ENCODE measurements at regions of chr9 and their contacts with region 1.

Region 1: GRCh38 chr9:88388172-88388885 is at the start of gene SPIN1:
- DNase-seq: peak; percentile 92
- ATAC-seq: peak; percentile 83
- H3K4me3 Mint-ChIP-seq: peak within 1 kb of the TSS; percentile 94
- H3K27ac Mint-ChIP-seq: peak within 1 kb of the TSS; percentile 97
- H3K4me1 Mint-ChIP-seq: peaks cover 40% of the 10 kb centered on the region
- H3K27me3 Mint-ChIP-seq: no peaks in the 10 kb centered on the region
- total RNA-seq, gene SPIN1: 17.9 to 22.1 TPM

Region 2: GRCh38 chr9:87840134-87840533 is 548.2 kb before region 1 on chr9:
- CTCF ChIA-PET with region 1: no interaction called
- POLR2A ChIA-PET with region 1: no interaction called
- intact Hi-C with region 1: no loop called
- DNase-seq: no peak
- ATAC-seq: no peak
- H3K4me3 Mint-ChIP-seq: no peak overlapping the region
- H3K27ac Mint-ChIP-seq: no peak overlapping the region
- H3K4me1 Mint-ChIP-seq: no peaks in the 10 kb centered on the region
- H3K27me3 Mint-ChIP-seq: no peaks in the 10 kb centered on the region

Region 3: DNA sequence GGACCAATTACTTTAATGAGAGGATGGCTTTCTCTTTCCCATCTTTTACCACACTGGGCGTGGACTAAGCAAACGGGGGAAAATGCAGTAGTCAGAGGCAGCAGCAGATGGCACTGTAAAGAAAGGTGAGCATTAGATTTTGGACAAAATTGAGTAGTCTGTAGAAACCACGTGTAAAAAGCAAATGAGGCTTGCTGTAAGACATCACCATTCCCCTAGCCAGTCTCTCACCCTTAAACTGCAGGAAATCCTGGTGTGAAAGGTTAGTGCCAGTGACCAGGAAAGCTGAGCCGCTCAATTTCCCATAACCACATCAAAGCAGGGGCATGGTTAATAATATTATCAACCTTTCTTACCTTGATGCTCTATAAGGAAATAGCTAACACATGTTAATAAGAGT is 281.8 kb before region 1 on chr9:
- CTCF ChIA-PET with region 1: no interaction called
- POLR2A ChIA-PET with region 1: no interaction called
- intact Hi-C with region 1: loop called in 1 of 2 experiments (anchors 10 kb)
- DNase-seq: peak; percentile 38
- ATAC-seq: peak; percentile 47
- H3K4me3 Mint-ChIP-seq: no peak overlapping the region
- H3K27ac Mint-ChIP-seq: no peak overlapping the region
- H3K4me1 Mint-ChIP-seq: peaks cover 6% of the 10 kb centered on the region
- H3K27me3 Mint-ChIP-seq: peaks cover 29% of the 10 kb centered on the region

Region 4: DNA sequence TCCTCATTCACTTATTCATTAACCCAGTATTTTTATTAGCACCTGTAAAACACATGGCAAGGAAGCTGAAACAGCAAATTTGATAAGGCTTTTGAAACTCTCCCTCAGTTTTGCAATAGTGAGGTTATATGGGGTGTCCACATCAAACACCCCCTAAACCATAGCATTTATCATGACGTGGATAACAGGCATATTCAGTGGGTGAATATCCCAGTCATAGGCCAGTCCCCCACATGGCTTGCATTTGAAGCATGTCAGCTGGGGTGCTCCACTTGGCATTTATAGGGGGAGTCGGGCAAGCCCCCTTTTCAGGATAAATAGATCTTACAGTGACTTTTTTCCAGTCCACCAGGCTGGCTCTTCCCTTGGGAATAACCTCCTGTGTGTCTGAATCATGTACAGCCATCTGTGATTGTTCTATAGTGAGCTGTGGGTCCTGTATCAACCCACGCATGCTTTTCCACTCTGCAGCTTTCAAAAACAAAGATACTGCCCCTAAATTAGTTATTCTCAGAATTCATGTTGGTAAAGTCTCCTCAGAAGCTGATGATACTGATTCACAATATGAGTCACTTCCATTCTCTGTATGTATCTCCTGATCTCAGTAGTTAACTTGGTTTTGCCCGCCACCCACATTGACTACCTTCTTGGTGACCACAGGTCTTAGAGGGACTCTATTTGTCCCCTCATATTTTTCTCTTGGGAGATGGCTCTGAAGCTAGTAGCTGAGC is 84.4 kb before region 1 on chr9:
- CTCF ChIA-PET with region 1: no interaction called
- POLR2A ChIA-PET with region 1: no interaction called
- intact Hi-C with region 1: loop called in 1 of 2 experiments (anchors 1 kb)
- DNase-seq: peak; percentile 81
- ATAC-seq: peak; percentile 91
- H3K4me3 Mint-ChIP-seq: no peak overlapping the region
- H3K27ac Mint-ChIP-seq: peak overlapping the region; percentile 68
- H3K4me1 Mint-ChIP-seq: peaks cover 27% of the 10 kb centered on the region
- H3K27me3 Mint-ChIP-seq: peaks cover 18% of the 10 kb centered on the region

Region 5: GRCh38 chr9:88418715-88419540 is 30.6 kb after region 1 on chr9:
- CTCF ChIA-PET with region 1: interaction called, 3 read pairs
- POLR2A ChIA-PET with region 1: no interaction called
- intact Hi-C with region 1: loop called in 1 of 2 experiments (anchors 1 kb)
- DNase-seq: peak; percentile 68
- ATAC-seq: peak; percentile 95
- H3K4me3 Mint-ChIP-seq: no peak overlapping the region
- H3K27ac Mint-ChIP-seq: peak overlapping the region; percentile 86
- H3K4me1 Mint-ChIP-seq: peaks cover 17% of the 10 kb centered on the region
- H3K27me3 Mint-ChIP-seq: no peaks in the 10 kb centered on the region

Region 6: GRCh38 chr9:88534456-88535261 is 146.3 kb after region 1 on chr9 and contains the start of gene NXNL2:
- CTCF ChIA-PET with region 1: no interaction called
- POLR2A ChIA-PET with region 1: no interaction called
- intact Hi-C with region 1: loop called in 1 of 2 experiments (anchors 1 kb)
- DNase-seq: peak; percentile 70
- ATAC-seq: peak; percentile 40
- H3K4me3 Mint-ChIP-seq: peak within 1 kb of the TSS; percentile 21
- H3K27ac Mint-ChIP-seq: no peak within 1 kb of the TSS
- H3K4me1 Mint-ChIP-seq: peaks cover 12% of the 10 kb centered on the region
- H3K27me3 Mint-ChIP-seq: peaks cover 28% of the 10 kb centered on the region
- total RNA-seq, gene NXNL2: not detected

Region 7: DNA sequence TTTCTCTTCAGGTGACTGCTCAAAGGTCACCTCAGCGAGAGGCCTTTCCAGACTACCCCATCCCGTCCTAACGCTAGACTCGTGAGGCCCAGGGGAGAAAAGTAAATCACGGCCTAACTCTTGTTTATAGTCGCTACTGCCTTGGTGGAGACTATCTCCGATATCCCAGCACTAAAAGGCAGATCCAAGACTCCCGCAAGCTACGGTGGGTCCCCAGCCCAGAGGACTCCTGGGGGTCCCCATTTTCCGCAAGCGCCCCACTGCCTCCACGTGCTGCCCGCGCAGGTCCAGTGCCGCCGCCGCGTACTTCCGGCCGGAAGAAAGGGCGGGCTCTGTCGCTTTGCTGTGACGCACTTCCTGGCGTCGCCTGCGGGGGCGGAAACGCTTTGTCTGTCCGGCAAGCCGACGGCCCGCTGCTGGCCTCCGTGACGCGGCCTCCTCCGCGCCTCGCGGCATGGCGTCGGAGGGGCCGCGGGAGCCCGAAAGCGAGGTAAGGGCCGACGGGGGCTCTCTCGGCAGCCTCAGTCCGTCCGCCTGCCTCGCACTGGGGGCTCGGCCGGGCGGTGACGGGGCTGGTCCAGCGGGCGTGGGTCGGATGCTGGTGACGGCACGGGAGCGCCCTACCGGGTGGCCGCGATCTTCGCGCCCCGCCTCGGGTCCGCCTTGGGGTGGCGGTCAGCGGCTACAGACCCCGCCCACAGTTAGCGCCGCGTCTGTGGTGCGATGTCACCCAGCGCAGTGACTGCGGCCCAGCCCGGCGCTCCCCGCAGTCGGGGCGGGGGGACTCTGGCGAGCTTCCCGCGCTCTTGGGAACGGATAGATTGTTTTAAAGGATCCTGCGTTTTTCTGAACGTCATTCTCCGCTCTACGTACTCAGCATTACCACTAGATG is 930.0 kb after region 1 on chr9 and contains the start of gene SECISBP2:
- CTCF ChIA-PET with region 1: no interaction called
- POLR2A ChIA-PET with region 1: no interaction called
- intact Hi-C with region 1: loop called in 1 of 2 experiments (anchors 2 kb)
- DNase-seq: peak; percentile 97
- ATAC-seq: peak; percentile 90
- H3K4me3 Mint-ChIP-seq: peak within 1 kb of the TSS; percentile 82
- H3K27ac Mint-ChIP-seq: peak within 1 kb of the TSS; percentile 98
- H3K4me1 Mint-ChIP-seq: peaks cover 79% of the 10 kb centered on the region
- H3K27me3 Mint-ChIP-seq: no peaks in the 10 kb centered on the region
- total RNA-seq, gene SECISBP2: 38.6 to 49.9 TPM